ENCODE measurements at regions of chr3 and their contacts with region 1.

Region 1: DNA sequence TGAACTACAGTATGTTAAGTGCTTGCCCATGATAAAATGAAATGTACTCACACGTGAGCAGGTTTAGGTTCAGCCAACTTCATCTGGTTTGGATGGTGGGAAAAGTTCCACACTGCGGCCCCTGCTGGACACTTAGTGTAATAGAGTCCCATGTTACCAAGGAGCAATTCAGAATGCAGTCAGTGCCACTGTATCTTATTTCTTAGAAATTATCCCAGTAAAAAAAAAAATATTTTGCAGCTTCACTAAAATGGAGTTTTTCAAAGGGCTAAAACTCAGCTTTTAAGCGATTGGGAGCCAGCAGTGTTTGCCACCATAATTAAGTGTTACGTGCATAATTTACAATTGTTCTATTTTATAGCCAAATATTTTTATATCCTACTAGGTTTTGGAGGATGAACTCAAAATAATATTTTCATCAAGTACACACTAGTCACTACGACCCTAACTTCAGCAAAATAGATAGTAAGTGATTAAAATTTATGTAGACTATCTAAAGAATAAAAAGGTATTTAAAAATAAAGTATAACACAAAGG is 371.7 kb upstream of the GBE1 start:
- DNase-seq: peak; percentile 44
- H3K4me3 ChIP-seq: no peak overlapping the region
- CTCF ChIP-seq: peak; percentile 91

Region 2: GRCh38 chr3:81666493-81667121 is 466.5 kb before region 1 on chr3:
- in situ Hi-C with region 1: loop called (anchors 25 kb)
- DNase-seq: peak; percentile 8
- H3K4me3 ChIP-seq: no peak overlapping the region
- CTCF ChIP-seq: peak; percentile 74

Region 3: DNA sequence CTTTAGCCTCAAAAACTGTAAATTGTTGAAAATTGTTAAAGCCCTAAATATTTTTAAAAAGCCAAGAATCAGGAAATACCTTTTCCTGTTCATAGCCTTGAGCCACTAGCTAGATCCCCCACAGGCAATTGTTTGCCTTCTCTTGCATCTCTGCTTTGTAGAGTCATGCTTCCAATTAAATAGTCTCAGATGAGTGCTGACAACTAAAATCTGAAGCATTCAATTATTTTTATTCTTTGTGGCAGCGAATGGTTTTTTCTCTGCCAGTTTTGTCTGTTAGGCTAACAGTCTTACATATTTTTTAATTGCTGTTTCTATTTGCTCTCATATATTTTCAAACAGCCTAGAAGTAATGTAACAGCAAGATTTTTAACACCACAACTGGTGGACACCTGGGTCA is 94.6 kb before region 1 on chr3:
- in situ Hi-C with region 1: no loop called
- DNase-seq: no peak
- H3K4me3 ChIP-seq: no peak overlapping the region
- CTCF ChIP-seq: no peak

Measured in astrocyte of the cerebellum (primary cell).